ENCODE measurements at regions of chr19 and their contacts with region 1.

Region 1: GRCh38 chr19:45564131-45564780 is 20.3 kb downstream of the OPA3 start:
- DNase-seq: no peak
- H3K4me3 ChIP-seq: no peak overlapping the region
- H3K27ac ChIP-seq: no peak overlapping the region
- H3K4me1 ChIP-seq: peaks cover 0 to 18% (median 12%) of the 10 kb centered on the region in 3 donors
- H3K27me3 ChIP-seq: no peaks in the 10 kb centered on the region
- CTCF ChIP-seq: no peak
- POLR2A ChIP-seq: no peak

Region 2: DNA sequence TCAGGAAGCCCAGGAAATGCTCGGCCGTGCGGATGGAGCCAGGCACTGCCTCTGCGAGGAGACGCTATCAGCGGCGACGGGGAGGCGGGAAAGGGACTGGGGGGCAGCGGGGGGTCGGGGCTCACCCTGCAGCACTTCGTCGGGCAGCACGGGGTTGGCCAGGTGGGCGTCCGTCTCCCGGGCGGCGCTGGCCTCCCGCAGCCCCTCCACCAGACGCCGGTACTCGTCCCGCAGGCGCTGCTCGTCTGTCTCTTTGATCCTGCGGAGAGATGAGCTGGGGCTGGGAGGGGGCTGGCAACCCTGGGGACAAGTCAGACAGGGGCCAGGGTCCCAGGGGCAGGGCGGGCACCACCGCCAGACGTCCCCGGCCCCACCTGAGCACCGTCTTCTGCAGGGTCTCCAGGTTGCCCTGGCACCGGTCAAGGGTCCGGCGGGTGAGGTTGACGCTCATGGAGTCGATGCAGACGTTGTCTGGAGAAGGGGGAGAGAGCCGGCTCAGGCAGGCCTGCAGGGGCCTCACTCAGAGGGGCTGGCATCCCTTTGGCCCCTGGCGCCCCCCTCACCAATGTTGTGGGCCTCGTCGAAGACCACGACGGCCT is 200.3 kb before region 1 on chr19:
- intact Hi-C with region 1: no loop called
- DNase-seq: no peak
- H3K4me3 ChIP-seq: no peak overlapping the region
- H3K27ac ChIP-seq: no peak overlapping the region
- H3K4me1 ChIP-seq: peaks cover 0 to 3% (median 0%) of the 10 kb centered on the region in 3 donors
- H3K27me3 ChIP-seq: no peaks in the 10 kb centered on the region
- CTCF ChIP-seq: no peak
- POLR2A ChIP-seq: no peak

Region 3: GRCh38 chr19:45523642-45524256 is 40.5 kb before region 1 on chr19:
- intact Hi-C with region 1: loop called (anchors 5 kb)
- DNase-seq: peak; percentile 34
- H3K4me3 ChIP-seq: no peak overlapping the region
- H3K27ac ChIP-seq: peak overlapping the region in 3 of 4 donors; percentile 22 to 59 (median 43)
- H3K4me1 ChIP-seq: peaks cover 12 to 45% (median 20%) of the 10 kb centered on the region in 3 donors
- H3K27me3 ChIP-seq: no peaks in the 10 kb centered on the region
- CTCF ChIP-seq: peak; percentile 96 to 98 (median 97)
- POLR2A ChIP-seq: no peak